ENCODE measurements at regions of chr1 and their contacts with region 1.

Region 1: DNA sequence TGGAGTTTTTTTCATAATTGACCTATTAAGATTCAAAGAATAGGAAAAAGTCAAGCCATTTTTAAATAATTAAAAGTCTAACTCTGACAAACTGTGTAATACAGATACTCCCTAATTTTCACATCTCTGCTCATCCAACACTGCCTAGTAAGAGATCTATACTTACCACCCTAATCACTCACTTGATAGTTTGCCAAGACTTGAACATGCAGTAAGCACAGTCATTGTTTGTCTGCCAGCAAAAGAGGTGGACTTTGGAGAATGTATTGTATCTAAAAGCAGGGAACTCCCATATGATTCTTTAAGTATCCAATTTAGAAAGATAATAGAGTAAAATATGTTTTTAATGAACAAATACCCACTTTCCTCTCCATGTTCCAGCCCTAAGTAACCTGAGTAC is 15.5 kb downstream of the TMEM59 start:
- DNase-seq: no peak
- ATAC-seq: no peak
- H3K4me3 ChIP-seq: no peak overlapping the region
- H3K27ac ChIP-seq: no peak overlapping the region
- H3K4me1 ChIP-seq: no peaks in the 10 kb centered on the region
- H3K27me3 ChIP-seq: no peaks in the 10 kb centered on the region
- CTCF ChIP-seq: no peak
- EP300 ChIP-seq: no peak
- POLR2A ChIP-seq: no peak
- RAD21 ChIP-seq: no peak

Region 2: GRCh38 chr1:54047384-54048305 is 10.2 kb after region 1 on chr1:
- CTCF ChIA-PET with region 1: interaction called, 10 read pairs
- POLR2A ChIA-PET with region 1: no interaction called
- RAD21 ChIA-PET with region 1: no interaction called
- SMC1A ChIA-PET with region 1: interaction called, 9 read pairs
- in situ Hi-C with region 1: no loop called
- intact Hi-C with region 1: no loop called
- DNase-seq: no peak
- ATAC-seq: peak; percentile 67
- H3K4me3 ChIP-seq: peak overlapping the region; percentile 39; the same call in 1 of the 2 replicates
- H3K27ac ChIP-seq: peak overlapping the region; percentile 50
- H3K4me1 ChIP-seq: peaks cover 18% of the 10 kb centered on the region
- H3K27me3 ChIP-seq: no peaks in the 10 kb centered on the region
- CTCF ChIP-seq: no peak
- EP300 ChIP-seq: no peak
- POLR2A ChIP-seq: no peak
- RAD21 ChIP-seq: no peak